Sigmoid colon (tissue), 7 donors: ENCODE measurements at regions of chr17 and their contacts with region 1.

Region 1: DNA sequence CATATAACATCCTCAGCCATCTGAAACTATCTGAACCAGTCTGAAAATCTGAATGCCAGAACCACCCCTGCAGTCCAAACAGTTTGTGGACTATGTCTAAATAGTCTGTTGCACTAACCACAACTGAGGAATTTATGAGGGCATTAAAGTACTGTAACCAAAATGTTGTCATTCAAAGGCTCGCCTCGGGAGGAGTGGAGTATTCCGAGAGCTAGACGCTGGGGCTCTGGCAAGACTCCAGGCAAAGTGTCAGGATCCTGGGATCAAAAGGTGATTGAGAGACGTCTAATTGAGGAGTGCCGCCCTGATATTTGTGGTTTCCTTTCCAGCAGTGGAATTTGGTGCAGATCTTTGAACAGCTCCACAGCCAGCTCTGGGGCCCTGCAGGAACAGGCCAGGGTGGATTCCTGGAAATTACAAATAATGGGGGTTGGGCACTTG is 142.9 kb upstream of the MYOCD start:
- DNase-seq: no peak
- H3K4me3 ChIP-seq: no peak overlapping the region
- H3K27ac ChIP-seq: peak overlapping the region in 3 of 4 donors; percentile 36 to 79 (median 75)
- H3K4me1 ChIP-seq: peaks cover 0 to 33% (median 29%) of the 10 kb centered on the region in 4 donors
- H3K27me3 ChIP-seq: no peaks in the 10 kb centered on the region
- CTCF ChIP-seq: no peak
- EP300 ChIP-seq: no peak
- POLR2A ChIP-seq: no peak

Region 2: DNA sequence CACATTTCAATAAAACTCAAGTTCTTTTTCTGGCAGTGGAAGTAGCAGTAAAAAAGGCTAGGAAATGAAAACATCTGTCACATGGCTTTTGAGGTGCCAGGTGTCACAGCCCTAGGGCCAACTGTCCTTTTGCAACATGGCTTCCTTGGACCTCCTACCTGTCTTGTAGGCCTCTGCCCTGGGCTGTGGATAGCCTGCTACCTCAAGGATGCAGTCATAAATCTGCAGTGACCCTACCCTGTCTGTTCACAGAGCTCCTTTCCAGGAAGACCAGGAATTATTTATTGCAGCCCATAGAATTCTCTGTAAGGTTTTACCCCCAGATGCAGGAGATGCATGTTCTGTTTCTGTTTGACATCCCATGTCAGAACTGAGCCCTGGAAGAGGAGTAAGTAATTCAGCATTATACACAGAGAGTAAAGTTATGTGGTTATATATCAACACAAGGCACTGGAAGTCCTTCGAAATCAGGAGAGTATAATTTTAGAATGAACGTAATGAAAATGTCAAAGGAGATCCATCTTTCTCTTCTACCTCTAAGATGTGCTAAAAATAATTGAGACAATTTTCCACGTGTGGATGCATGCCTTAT is 329.5 kb before region 1 on chr17:
- intact Hi-C with region 1: loop called (anchors 10 kb)
- DNase-seq: no peak
- H3K4me3 ChIP-seq: no peak overlapping the region
- H3K27ac ChIP-seq: peak overlapping the region in 3 of 4 donors; percentile 59 to 72 (median 60)
- H3K4me1 ChIP-seq: peaks cover 0 to 20% (median 15%) of the 10 kb centered on the region in 4 donors
- H3K27me3 ChIP-seq: no peaks in the 10 kb centered on the region
- CTCF ChIP-seq: no peak
- EP300 ChIP-seq: peak; percentile 10 to 48 (median 35)
- POLR2A ChIP-seq: no peak

Region 3: GRCh38 chr17:12402963-12403622 is 119.7 kb before region 1 on chr17:
- intact Hi-C with region 1: no loop called
- DNase-seq: no peak
- H3K4me3 ChIP-seq: no peak overlapping the region
- H3K27ac ChIP-seq: peak overlapping the region in 1 of 4 donors; percentile 5
- H3K4me1 ChIP-seq: peaks cover 0 to 35% (median 31%) of the 10 kb centered on the region in 4 donors
- H3K27me3 ChIP-seq: no peaks in the 10 kb centered on the region
- CTCF ChIP-seq: no peak
- EP300 ChIP-seq: no peak
- POLR2A ChIP-seq: no peak

Region 4: DNA sequence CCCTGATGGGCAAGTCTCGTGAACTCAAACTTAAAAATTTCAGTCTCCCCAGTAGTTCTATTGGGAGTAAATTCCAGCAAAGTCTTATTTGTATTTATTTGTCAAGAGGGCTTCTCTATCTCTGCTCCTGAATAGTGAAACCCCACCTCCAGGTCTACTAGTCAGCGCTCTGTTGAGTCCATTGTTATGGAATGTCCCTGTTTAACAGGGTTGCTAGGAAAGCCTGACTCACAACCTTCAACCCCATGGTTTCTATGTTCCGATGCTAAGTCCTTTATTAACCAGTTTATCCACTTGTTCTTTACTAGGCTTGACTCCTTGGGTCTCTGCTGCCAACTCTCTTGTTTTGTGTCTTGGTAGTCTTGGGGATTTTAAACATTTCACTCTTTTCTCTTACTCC is 107.7 kb before region 1 on chr17:
- intact Hi-C with region 1: loop called (anchors 10 kb)
- DNase-seq: no peak
- H3K4me3 ChIP-seq: no peak overlapping the region
- H3K27ac ChIP-seq: peak overlapping the region; percentile 69 to 86 (median 82)
- H3K4me1 ChIP-seq: peaks cover 0 to 68% (median 27%) of the 10 kb centered on the region in 4 donors
- H3K27me3 ChIP-seq: no peaks in the 10 kb centered on the region
- CTCF ChIP-seq: no peak
- EP300 ChIP-seq: peak in 1 of 4 donors; percentile 36
- POLR2A ChIP-seq: no peak

Region 5: GRCh38 chr17:12463102-12463501 is 59.7 kb before region 1 on chr17:
- intact Hi-C with region 1: loop called (anchors 10 kb)
- DNase-seq: peak; percentile 68
- H3K4me3 ChIP-seq: no peak overlapping the region
- H3K27ac ChIP-seq: peak overlapping the region; percentile 22 to 76 (median 73)
- H3K4me1 ChIP-seq: peaks cover 0 to 72% (median 44%) of the 10 kb centered on the region in 4 donors
- H3K27me3 ChIP-seq: no peaks in the 10 kb centered on the region
- CTCF ChIP-seq: no peak
- EP300 ChIP-seq: peak in 1 of 4 donors; percentile 71
- POLR2A ChIP-seq: no peak

Region 6: GRCh38 chr17:12545877-12546513 is 23.2 kb after region 1 on chr17:
- intact Hi-C with region 1: no loop called
- DNase-seq: no peak
- H3K4me3 ChIP-seq: no peak overlapping the region
- H3K27ac ChIP-seq: no peak overlapping the region
- H3K4me1 ChIP-seq: peaks cover 0 to 39% (median 31%) of the 10 kb centered on the region in 4 donors
- H3K27me3 ChIP-seq: no peaks in the 10 kb centered on the region
- CTCF ChIP-seq: peak; percentile 12 to 63 (median 60)
- EP300 ChIP-seq: no peak
- POLR2A ChIP-seq: no peak

Region 7: DNA sequence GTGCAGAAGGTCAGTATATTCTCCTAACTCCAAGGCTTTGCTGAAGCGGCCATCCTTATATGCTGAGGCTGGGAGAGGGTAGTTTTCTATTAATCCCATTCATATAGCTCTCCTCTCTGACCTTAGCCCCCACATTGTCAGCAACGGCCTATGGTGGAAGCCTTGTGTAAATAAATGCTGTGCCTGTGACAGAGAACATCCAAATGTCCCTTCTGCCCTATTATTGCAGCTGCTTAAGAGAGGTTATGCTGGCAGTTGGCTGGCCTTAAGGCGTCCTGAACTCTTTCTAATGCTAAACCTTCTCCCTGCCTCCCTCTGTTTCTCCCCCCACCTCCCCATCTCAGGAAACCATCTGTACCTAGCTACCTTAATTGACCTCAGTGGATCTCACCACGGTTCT is 320.2 kb after region 1 on chr17:
- intact Hi-C with region 1: no loop called
- DNase-seq: no peak
- H3K4me3 ChIP-seq: no peak overlapping the region
- H3K27ac ChIP-seq: no peak overlapping the region
- H3K4me1 ChIP-seq: no peaks in the 10 kb centered on the region
- H3K27me3 ChIP-seq: no peaks in the 10 kb centered on the region
- CTCF ChIP-seq: no peak
- EP300 ChIP-seq: no peak
- POLR2A ChIP-seq: no peak